Cardiac septum (tissue), 1 donor: ENCODE measurements at regions of chr2 and their contacts with region 1.

Region 1: GRCh38 chr2:135004005-135004746 is 43.1 kb downstream of the MAP3K19 start:
- DNase-seq: peak; percentile 81

Region 2: GRCh38 chr2:134504586-134505336 is 499.4 kb before region 1 on chr2:
- intact Hi-C with region 1: no loop called
- DNase-seq: peak; percentile 35

Region 3: GRCh38 chr2:134988994-134989605 is 15.1 kb before region 1 on chr2:
- intact Hi-C with region 1: no loop called
- DNase-seq: no peak

Region 4: DNA sequence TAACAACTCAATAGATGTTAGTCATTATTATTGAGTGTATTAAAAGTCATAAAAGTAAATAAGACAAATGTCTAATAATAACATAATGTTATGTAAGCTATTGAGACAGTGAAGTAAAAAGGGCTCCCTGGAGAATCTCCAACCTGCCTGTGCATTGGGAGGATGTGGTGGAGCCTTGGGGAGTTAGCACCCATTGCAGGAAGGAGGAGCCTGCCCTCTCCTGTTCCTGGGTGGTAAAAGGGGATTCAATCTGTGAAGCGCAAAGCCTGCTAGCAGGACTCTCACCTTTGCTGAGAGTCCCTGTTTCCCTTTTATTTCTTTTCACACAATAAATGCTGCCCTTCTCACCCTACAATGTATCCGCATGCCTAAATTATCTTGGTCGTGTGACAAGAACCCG is 254.0 kb after region 1 on chr2:
- intact Hi-C with region 1: loop called (anchors 5 kb)
- DNase-seq: no peak